Colonic mucosa (tissue), 4 donors: ENCODE measurements at regions of chr22 and their contacts with region 1.

Region 1: GRCh38 chr22:24244101-24244787 is 638 bp downstream of the GGT5 start:
- DNase-seq: no peak
- H3K4me3 ChIP-seq: no peak overlapping the region
- H3K27ac ChIP-seq: no peak overlapping the region
- H3K4me1 ChIP-seq: no peaks in the 10 kb centered on the region
- H3K27me3 ChIP-seq: no peaks in the 10 kb centered on the region
- CTCF ChIP-seq: no peak

Region 2: GRCh38 chr22:23984430-23984829 is 259.8 kb before region 1 on chr22:
- intact Hi-C with region 1: loop called (anchors 10 kb)
- DNase-seq: no peak
- H3K4me3 ChIP-seq: no peak overlapping the region
- H3K27ac ChIP-seq: no peak overlapping the region
- H3K4me1 ChIP-seq: no peaks in the 10 kb centered on the region
- H3K27me3 ChIP-seq: no peaks in the 10 kb centered on the region
- CTCF ChIP-seq: peak; percentile 77

Region 3: DNA sequence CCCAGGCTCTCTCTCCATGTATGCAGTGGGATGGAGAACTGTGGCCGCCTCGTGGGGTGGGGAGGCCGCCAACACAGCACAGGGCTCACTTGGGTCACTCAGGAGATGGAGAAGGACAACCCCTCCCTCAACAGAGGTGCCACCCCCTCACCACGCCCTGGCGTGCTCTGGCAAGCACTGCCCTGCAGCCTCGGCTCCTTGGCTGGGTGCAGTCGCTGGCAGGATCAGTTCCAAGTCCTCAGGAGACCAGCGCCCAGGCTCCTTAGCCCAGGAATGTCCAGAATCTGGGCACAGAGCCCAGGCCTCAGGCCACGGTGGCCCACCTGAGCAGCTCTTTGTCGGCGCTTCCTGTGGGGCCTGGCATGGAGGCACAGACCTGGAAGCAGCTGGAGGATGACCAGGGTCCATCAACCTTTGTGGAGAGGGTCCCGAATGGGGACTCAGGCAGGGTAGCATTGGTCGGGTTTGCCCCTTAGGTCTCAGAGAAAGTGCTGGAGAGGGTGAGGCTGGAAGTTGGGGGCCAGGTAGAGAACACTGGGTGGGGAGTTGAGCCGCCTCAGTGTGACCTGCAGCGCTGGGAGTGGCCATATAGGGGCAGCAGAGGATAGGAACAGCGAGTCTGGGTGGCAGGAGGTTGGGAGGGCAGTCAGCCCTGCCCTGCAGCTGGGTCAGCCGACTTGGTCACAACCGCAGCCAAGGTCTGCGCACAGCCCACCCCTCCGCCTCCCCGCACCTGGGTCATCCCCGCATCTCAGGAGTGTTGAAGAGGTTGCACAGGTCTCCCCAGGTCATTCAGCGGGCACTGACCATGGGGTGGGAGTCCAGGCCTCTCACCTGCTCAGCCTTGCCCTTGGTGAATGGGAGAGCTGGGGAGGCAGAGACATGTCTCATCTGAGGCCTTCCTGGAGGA is 54.7 kb before region 1 on chr22:
- intact Hi-C with region 1: loop called (anchors 5 kb)
- DNase-seq: peak; percentile 75
- H3K4me3 ChIP-seq: no peak overlapping the region
- H3K27ac ChIP-seq: no peak overlapping the region
- H3K4me1 ChIP-seq: no peaks in the 10 kb centered on the region
- H3K27me3 ChIP-seq: no peaks in the 10 kb centered on the region
- CTCF ChIP-seq: peak; percentile 80

Region 4: GRCh38 chr22:24265734-24266133 is 21.5 kb after region 1 on chr22:
- intact Hi-C with region 1: no loop called
- DNase-seq: no peak
- H3K4me3 ChIP-seq: no peak overlapping the region
- H3K27ac ChIP-seq: no peak overlapping the region
- H3K4me1 ChIP-seq: no peaks in the 10 kb centered on the region
- H3K27me3 ChIP-seq: no peaks in the 10 kb centered on the region
- CTCF ChIP-seq: no peak